ENCODE measurements at regions of chr17 and their contacts with region 1.

Region 1: GRCh38 chr17:11598274-11599221 is at the start of gene DNAH9:
- DNase-seq: peak; percentile 81 to 99 (median 95)

Region 2: GRCh38 chr17:11221721-11222120 is 376.8 kb before region 1 on chr17:
- intact Hi-C with region 1: no loop called
- DNase-seq: no peak

Region 3: DNA sequence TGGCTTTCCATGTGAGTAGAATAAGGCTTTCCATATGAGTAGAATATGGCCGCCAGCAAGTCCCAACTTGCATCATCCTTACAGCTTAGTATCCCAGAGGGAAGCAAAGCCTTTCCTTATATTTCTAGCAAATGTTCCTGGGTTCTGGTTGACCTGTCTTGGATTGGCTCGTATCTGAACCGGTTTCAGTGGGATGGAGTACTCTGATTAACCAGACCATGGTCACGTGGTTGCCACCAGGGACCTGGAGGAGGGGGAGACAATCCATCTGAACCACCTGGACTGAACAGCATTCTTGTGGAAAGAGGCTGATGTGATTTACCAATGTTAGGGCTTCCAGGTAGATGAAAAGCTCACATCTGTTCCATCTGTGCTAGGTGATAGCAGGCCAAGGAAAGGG is 268.5 kb before region 1 on chr17:
- intact Hi-C with region 1: no loop called
- DNase-seq: no peak

Region 4: DNA sequence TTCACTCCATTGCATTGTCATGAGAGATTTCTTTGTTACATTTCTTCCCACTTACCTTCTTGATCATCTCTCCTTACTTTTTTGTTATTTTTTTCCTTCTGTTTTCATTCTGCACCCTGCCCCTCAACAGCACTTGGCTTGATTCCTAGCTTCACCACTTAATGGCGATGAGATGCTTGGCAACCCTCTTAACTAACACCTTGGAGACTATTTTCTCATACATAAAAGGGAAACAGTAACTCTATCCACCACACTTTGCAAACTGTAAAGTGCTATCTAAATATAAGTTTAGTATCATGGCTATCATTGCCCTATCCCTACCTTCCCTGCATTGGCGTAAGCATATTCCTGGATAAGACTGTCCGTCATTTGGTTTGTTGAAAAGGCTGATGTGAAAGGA is 180.2 kb before region 1 on chr17:
- intact Hi-C with region 1: no loop called
- DNase-seq: no peak

Region 5: GRCh38 chr17:11644261-11645212 is 46.0 kb after region 1 on chr17:
- intact Hi-C with region 1: loop called (anchors 10 kb)
- DNase-seq: peak in 8 of 10 donors; percentile 26 to 89 (median 62)

Region 6: GRCh38 chr17:11779892-11780291 is 181.3 kb after region 1 on chr17:
- intact Hi-C with region 1: no loop called
- DNase-seq: no peak